B cell (primary cell): ENCODE measurements at regions of chr2 and their contacts with region 1.

Region 1: DNA sequence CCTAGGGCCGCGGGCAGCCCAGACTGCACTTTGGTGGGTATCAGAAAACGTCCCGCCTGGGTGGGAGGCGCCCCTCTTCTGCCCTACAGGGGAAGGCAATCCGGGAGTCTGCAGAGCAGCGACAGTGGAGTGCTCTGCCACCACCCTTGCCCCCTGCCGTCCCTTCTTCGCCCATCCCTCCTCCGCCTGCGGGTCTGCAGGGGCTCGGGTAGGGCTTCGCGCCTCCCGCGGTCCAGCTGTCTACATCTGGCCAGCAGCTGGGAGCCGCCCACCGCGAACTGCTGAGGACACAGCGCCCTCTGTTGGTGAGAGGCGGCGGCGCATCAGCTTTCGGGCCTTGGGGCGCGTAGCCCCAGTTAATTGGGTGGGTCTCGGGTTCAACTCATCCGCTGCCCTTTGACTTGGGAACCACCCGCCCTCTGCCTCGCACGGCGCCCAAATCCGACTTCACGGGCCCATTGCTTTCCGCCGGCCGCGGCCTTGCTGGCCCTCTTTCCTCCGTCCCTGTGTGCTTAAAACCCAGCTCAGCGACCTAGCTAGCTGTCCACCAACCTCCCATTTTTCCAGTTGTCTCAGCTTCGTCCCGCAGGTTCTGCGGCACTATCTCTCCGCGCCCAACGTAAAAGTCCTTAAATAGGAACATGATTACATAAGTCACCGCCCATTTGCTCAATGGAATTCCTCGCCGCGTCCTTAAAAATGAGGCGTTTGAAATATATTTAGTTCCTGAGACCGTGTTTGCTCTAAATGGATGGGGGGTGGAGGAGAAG is 17.6 kb downstream of the WNT10A start:
- DNase-seq: peak; percentile 87
- ATAC-seq: peak; percentile 18
- H3K4me3 ChIP-seq: peak overlapping the region in 4 of 5 experiments; percentile 66 to 68 (median 68)
- H3K4me3 Mint-ChIP-seq: peak overlapping the region; percentile 87
- H3K27ac ChIP-seq: no peak overlapping the region
- H3K27ac Mint-ChIP-seq: peak overlapping the region; percentile 91
- H3K4me1 ChIP-seq: peaks cover 47 to 54% of the 10 kb centered on the region in 2 donors
- H3K4me1 Mint-ChIP-seq: peaks cover 48% of the 10 kb centered on the region
- H3K27me3 ChIP-seq: peaks cover 0 to 28% (median 18%) of the 10 kb centered on the region in 4 experiments
- H3K27me3 Mint-ChIP-seq: peaks cover 31% of the 10 kb centered on the region
- CTCF ChIP-seq: peak; percentile 99

Region 2: GRCh38 chr2:218406209-218406948 is 491.9 kb before region 1 on chr2:
- CTCF ChIA-PET with region 1: no interaction called
- POLR2A ChIA-PET with region 1: no interaction called
- intact Hi-C with region 1: loop called (anchors 2 kb)
- DNase-seq: peak; percentile 93
- ATAC-seq: peak; percentile 81
- H3K4me3 ChIP-seq: peak overlapping the region; percentile 15 to 72 (median 53)
- H3K4me3 Mint-ChIP-seq: peak overlapping the region; percentile 88
- H3K27ac ChIP-seq: peak overlapping the region; percentile 62 to 82
- H3K27ac Mint-ChIP-seq: peak overlapping the region; percentile 90
- H3K4me1 ChIP-seq: peaks cover 30 to 48% of the 10 kb centered on the region in 2 donors
- H3K4me1 Mint-ChIP-seq: peaks cover 47% of the 10 kb centered on the region
- H3K27me3 ChIP-seq: no peaks in the 10 kb centered on the region
- H3K27me3 Mint-ChIP-seq: no peaks in the 10 kb centered on the region
- CTCF ChIP-seq: peak; percentile 69

Region 3: GRCh38 chr2:218659258-218659987 is 238.9 kb before region 1 on chr2 and contains the starts of genes BCS1L and ZNF142:
- CTCF ChIA-PET with region 1: interaction called, 4 read pairs
- POLR2A ChIA-PET with region 1: interaction called, 5 read pairs
- intact Hi-C with region 1: loop called (anchors 5 kb)
- DNase-seq: peak; percentile 91
- ATAC-seq: peak; percentile 97
- H3K4me3 ChIP-seq: peak within 1 kb of the TSS; percentile 65 to 93 (median 81)
- H3K4me3 Mint-ChIP-seq: peak within 1 kb of the TSS; percentile 99
- H3K27ac ChIP-seq: peak within 1 kb of the TSS; percentile 46 to 77
- H3K27ac Mint-ChIP-seq: peak within 1 kb of the TSS; percentile 95
- H3K4me1 ChIP-seq: peaks cover 12 to 16% of the 10 kb centered on the region in 2 donors
- H3K4me1 Mint-ChIP-seq: peaks cover 28% of the 10 kb centered on the region
- H3K27me3 ChIP-seq: no peaks in the 10 kb centered on the region
- H3K27me3 Mint-ChIP-seq: no peaks in the 10 kb centered on the region
- CTCF ChIP-seq: no peak
- total RNA-seq, gene BCS1L: 56.1 and 60.1 TPM in 2 replicates
- total RNA-seq, gene ZNF142: 51.1 and 56.1 TPM in 2 replicates

Region 4: DNA sequence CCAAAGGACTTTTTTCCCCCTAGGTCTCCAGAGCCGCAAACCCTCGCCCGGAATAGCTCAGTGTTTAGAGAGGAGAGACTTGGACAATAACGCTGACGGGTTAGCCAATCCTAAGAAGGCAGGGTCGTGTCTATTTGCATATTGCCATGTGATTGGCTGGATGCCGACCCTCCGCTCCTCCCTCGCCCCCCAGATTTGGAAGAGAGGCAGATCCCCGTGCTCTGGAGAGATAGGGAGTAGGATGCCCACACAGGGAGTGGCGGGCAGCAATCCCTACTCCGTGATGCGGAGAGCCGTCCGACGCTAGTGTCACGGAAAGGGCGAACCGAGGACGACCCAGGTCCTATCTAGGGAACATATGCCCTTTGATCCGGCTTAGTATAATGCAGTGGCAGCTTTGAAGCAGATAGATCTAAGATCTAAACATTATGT is 37.3 kb before region 1 on chr2:
- CTCF ChIA-PET with region 1: interaction called, 109 read pairs
- POLR2A ChIA-PET with region 1: no interaction called
- intact Hi-C with region 1: no loop called
- DNase-seq: peak; percentile 37
- ATAC-seq: no peak
- H3K4me3 ChIP-seq: no peak overlapping the region
- H3K4me3 Mint-ChIP-seq: peak overlapping the region; percentile 59
- H3K27ac ChIP-seq: no peak overlapping the region
- H3K27ac Mint-ChIP-seq: no peak overlapping the region
- H3K4me1 ChIP-seq: peaks cover 23 to 36% of the 10 kb centered on the region in 2 donors
- H3K4me1 Mint-ChIP-seq: peaks cover 21% of the 10 kb centered on the region
- H3K27me3 ChIP-seq: peaks cover 0 to 91% (median 51%) of the 10 kb centered on the region in 4 experiments
- H3K27me3 Mint-ChIP-seq: peaks cover 73% of the 10 kb centered on the region
- CTCF ChIP-seq: no peak

Region 5: DNA sequence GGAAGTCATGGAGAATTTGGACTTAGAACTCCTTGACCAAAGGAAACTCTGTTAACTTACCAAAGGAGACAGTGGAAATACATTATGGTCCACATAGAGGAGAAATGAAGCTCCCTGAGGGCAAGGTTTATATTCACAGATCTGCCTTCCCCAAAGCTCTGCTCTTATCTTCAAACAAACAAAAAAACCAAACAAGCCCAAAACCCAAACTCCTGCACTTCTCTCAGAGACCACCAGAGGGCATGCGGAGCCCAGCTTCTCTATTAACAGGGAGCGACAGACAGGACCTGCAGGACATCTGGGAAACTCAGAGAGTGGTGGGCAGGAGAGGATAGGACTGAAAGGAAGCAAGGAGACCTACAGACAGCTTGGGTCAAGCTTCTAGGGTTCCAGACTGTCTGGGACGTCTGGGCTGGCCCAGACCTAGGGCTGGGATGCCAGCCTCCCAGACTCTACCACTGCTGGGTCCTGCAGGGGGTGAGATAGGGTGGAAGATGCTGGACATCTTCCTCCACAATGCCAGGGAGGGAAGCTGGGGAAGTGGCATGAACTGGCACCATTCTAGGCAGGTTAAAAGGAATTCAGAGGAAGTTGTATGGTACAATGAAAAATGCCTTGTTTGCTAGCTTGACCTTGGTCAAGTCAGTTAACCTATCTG is 21.6 kb before region 1 on chr2:
- CTCF ChIA-PET with region 1: interaction called, 1,627 read pairs
- POLR2A ChIA-PET with region 1: interaction called, 490 read pairs
- intact Hi-C with region 1: loop called (anchors 1 kb)
- DNase-seq: peak; percentile 87
- ATAC-seq: no peak
- H3K4me3 ChIP-seq: no peak overlapping the region
- H3K4me3 Mint-ChIP-seq: peak overlapping the region; percentile 2
- H3K27ac ChIP-seq: no peak overlapping the region
- H3K27ac Mint-ChIP-seq: peak overlapping the region; percentile 23
- H3K4me1 ChIP-seq: peaks cover 54 to 70% of the 10 kb centered on the region in 2 donors
- H3K4me1 Mint-ChIP-seq: peaks cover 59% of the 10 kb centered on the region
- H3K27me3 ChIP-seq: peaks cover 0 to 40% (median 17%) of the 10 kb centered on the region in 4 experiments
- H3K27me3 Mint-ChIP-seq: peaks cover 19% of the 10 kb centered on the region
- CTCF ChIP-seq: peak; percentile 94

Region 6: GRCh38 chr2:218908721-218909619 is 10.7 kb after region 1 on chr2:
- CTCF ChIA-PET with region 1: interaction called, 36 read pairs
- POLR2A ChIA-PET with region 1: interaction called, 5 read pairs
- intact Hi-C with region 1: no loop called
- DNase-seq: peak; percentile 91
- ATAC-seq: peak; percentile 97
- H3K4me3 ChIP-seq: peak overlapping the region in 4 of 5 experiments; percentile 49 to 83 (median 60)
- H3K4me3 Mint-ChIP-seq: peak overlapping the region; percentile 91
- H3K27ac ChIP-seq: peak overlapping the region; percentile 7 to 18
- H3K27ac Mint-ChIP-seq: peak overlapping the region; percentile 82
- H3K4me1 ChIP-seq: peaks cover 11 to 15% of the 10 kb centered on the region in 2 donors
- H3K4me1 Mint-ChIP-seq: peaks cover 10% of the 10 kb centered on the region
- H3K27me3 ChIP-seq: peaks cover 0 to 10% (median 1%) of the 10 kb centered on the region in 4 experiments
- H3K27me3 Mint-ChIP-seq: peaks cover 24% of the 10 kb centered on the region
- CTCF ChIP-seq: no peak

Region 7: GRCh38 chr2:218979846-218980734 is 81.8 kb after region 1 on chr2:
- CTCF ChIA-PET with region 1: interaction called, 17 read pairs
- POLR2A ChIA-PET with region 1: interaction called, 3 read pairs
- intact Hi-C with region 1: loop called (anchors 5 kb)
- DNase-seq: peak; percentile 91
- ATAC-seq: peak; percentile 85
- H3K4me3 ChIP-seq: peak overlapping the region in 4 of 5 experiments; percentile 3 to 45 (median 26)
- H3K4me3 Mint-ChIP-seq: peak overlapping the region; percentile 85
- H3K27ac ChIP-seq: no peak overlapping the region
- H3K27ac Mint-ChIP-seq: peak overlapping the region; percentile 63
- H3K4me1 ChIP-seq: peaks cover 37 to 51% of the 10 kb centered on the region in 2 donors
- H3K4me1 Mint-ChIP-seq: peaks cover 28% of the 10 kb centered on the region
- H3K27me3 ChIP-seq: peaks cover 0 to 79% (median 55%) of the 10 kb centered on the region in 4 experiments
- H3K27me3 Mint-ChIP-seq: peaks cover 65% of the 10 kb centered on the region
- CTCF ChIP-seq: peak; percentile 87